ENCODE measurements at regions of chr7 and their contacts with region 1.

Region 1: GRCh38 chr7:7968543-7969305 is at the start of gene GLCCI1:
- DNase-seq: peak; percentile 94
- CTCF ChIP-seq: no peak

Region 2: DNA sequence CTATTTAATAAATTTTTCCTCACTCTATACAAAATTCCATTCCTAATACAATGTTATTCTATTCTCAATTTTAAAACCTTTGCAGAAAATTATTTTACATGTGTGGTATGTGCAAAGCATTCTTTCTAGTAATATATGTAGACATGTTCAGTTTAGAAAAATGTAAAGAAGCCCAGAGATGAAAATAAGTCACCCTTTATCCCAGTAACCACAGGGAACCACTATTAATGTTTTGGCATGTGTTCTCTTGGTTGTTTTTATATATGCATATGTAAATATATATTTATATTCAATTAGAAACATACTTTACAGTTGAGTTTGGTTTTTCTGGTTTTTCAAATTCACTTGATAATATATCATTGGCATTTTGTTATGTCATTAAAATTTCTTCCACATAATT is 14.9 kb before region 1 on chr7:
- CTCF ChIA-PET with region 1: interaction called, 13 read pairs
- POLR2A ChIA-PET with region 1: no interaction called
- DNase-seq: no peak
- CTCF ChIP-seq: no peak

Region 3: DNA sequence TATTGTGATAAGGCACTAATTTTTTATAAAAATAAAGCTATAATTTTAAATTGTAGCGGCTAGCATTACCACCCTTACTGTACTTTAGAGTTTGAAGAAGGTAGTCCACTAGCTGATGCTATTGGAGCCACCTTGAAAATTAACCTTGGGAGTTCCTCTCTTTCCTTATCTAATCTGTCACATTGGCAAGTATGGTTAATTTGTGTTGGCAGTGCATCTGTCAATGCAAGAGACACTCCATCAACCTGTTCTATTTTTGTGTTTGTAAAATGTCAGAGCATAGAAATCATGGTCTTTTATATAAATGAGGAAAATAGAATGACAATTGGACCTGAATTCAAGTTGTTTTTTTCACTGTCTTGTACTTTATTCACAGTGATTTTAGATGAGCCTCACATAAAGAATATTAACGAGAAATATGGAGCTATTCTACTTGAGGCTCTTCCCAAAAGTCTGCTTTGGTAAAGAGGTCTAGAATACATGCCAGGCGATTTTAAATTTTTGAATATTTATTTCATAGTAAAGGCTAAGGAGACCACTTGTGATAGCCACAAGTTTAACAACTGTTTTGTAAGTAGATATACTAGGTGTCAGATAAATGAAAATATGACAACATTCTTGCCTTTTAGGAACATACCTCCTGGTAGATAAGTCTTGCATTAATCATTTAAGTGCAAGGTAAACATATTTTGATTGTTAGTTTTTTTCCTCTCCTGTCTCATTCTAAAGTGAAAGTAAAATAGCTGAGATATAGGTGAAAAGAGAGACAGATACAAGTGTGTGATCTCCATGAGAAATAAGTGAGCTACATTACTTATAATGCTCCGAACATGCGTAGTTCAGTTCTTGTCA is 20.6 kb after region 1 on chr7:
- CTCF ChIA-PET with region 1: interaction called, 13 read pairs
- POLR2A ChIA-PET with region 1: no interaction called
- DNase-seq: no peak
- CTCF ChIP-seq: no peak